ENCODE measurements at regions of chr19 and their contacts with region 1.

Region 1: DNA sequence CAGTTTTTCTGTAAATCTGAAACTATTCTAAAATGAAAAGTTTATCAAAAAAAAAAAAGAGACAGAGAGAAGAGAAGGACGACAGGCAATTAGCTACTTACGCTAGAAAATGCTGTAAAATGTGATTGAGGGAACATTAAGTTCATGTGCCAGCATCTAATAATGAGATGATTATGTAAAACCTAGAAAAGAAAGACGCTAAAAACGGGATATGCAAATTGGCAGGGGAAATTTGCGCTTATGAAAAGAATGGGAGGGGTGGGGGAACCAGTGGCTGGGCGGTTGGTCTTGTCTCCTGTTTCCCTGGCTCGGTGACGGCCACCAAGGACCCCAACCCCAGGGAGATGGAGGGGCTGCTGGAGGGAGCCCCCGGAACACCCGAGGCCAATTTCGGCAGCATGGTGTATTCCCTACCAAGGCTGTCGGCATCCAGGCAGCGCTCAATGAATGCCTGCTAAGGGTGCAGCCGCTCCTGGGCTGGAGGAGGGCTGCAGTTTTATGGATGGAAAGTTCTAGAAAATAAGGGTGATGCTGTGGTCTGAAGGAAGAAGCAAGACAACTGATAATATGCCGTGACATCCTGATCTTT is 34.2 kb downstream of the GNG7 start:
- DNase-seq: peak; percentile 67
- CTCF ChIP-seq: no peak

Region 2: GRCh38 chr19:2750808-2751443 is 82.7 kb after region 1 on chr19:
- in situ Hi-C with region 1: loop called (anchors 5 kb)
- DNase-seq: no peak
- CTCF ChIP-seq: no peak